ENCODE measurements at regions of chr5 and their contacts with region 1.

Region 1: DNA sequence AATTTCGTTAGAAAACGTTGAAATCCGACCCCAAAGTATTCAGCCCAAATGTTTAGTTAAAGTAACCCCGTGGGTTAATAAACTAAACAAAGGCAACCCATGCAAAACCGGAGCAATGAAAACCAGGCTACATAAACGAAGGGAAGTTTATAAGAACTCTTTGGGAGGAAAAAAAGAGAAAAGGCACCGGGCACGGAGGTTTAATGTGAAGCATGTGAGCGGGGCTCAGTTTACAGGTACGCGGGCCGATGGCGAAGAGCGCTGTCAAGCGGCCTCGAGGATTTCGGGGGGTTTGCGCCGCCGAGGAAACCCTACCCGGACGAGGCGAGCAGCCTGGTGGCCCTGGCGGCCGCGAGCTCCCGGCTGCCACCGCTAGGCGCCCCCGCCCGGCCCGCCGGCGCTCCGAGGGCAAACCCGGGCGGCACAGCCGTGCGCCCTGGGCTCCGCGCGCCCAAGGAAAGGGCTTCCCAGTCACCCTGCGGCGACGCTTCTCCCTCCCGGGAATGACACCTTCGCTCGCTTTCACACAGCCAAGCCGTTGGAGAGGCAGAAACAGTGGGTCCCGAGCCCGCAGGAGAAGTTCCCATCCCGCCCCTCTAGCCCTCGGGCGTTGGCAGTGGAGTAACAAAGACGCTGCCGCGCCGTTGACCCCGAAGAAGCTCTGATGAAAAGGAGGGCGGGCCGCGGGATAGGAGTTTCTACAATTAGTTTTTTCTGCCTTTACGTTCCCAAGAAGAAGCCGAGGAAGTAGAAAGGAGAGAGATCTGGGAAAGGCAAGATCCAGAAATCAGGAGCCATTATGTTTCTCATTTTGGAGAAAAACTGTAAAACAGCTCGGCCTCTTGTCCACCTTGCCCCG is 126.0 kb downstream of the TMEM174 start:
- DNase-seq: peak in 1 of 6 donors; percentile 70
- ATAC-seq: peak; percentile 47 to 81 (median 68)
- H3K4me3 ChIP-seq: peak overlapping the region in 1 of 4 donors; percentile 12
- H3K27ac ChIP-seq: no peak overlapping the region
- H3K4me1 ChIP-seq: peaks cover 0 to 4% (median 0%) of the 10 kb centered on the region in 3 donors
- H3K27me3 ChIP-seq: peaks cover 3 to 49% (median 27%) of the 10 kb centered on the region in 4 donors
- CTCF ChIP-seq: peak in 1 of 4 donors; percentile 14

Region 2: GRCh38 chr5:73229209-73229661 is 69.8 kb before region 1 on chr5:
- intact Hi-C with region 1: loop called in 1 of 3 experiments (anchors 10 kb)
- DNase-seq: no peak
- ATAC-seq: no peak
- H3K4me3 ChIP-seq: no peak overlapping the region
- H3K27ac ChIP-seq: no peak overlapping the region
- H3K4me1 ChIP-seq: peaks cover 0 to 7% (median 6%) of the 10 kb centered on the region in 3 donors
- H3K27me3 ChIP-seq: peaks cover 0 to 36% (median 4%) of the 10 kb centered on the region in 4 donors
- CTCF ChIP-seq: no peak

Region 3: DNA sequence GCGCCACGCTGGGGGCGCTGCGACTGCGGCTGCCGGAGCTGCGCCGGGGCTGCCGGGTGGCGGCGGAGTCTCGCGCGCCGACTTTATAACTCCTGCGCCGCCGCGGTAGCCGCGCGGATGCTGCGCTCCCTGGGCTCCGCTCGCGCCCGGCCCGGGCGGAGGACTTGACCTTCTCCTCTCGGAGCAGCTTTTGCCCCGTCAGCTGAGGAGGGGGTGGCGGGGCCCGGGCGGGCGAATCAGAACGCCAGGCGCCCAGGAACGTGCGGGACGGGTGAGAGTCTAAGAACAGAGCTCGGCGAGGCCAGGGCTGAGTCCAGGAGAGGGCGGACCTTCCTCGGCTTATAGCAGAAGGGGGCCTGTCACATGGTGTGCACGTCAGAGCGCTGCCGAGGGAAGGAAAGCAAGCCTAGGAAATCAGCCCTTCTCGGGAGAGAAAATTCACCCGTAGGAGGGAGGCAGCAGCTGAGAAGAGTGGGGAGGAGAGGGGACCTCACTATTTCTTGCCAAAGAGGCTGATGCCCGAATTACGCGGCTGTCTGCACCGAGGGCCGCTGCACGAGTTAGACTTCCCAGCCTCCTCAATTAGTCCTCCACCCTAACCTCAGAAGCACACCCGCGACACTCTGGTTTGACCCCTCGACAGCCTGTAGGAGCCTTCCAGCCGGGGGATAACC is 149.6 kb after region 1 on chr5 and contains the start of gene FOXD1:
- intact Hi-C with region 1: loop called in 1 of 3 experiments (anchors 10 kb)
- DNase-seq: peak in 5 of 6 donors; percentile 26 to 81 (median 55)
- ATAC-seq: peak; percentile 62 to 82 (median 69)
- H3K4me3 ChIP-seq: peak within 1 kb of the TSS in 2 of 4 donors; percentile 29 to 43
- H3K27ac ChIP-seq: no peak within 1 kb of the TSS
- H3K4me1 ChIP-seq: peaks cover 0 to 6% (median 4%) of the 10 kb centered on the region in 3 donors
- H3K27me3 ChIP-seq: peaks cover 23 to 67% (median 51%) of the 10 kb centered on the region in 4 donors
- CTCF ChIP-seq: no peak
- total RNA-seq, gene FOXD1: 0.06 to 0.12 TPM in 2 of 6 donors, not detected in the others

Region 4: DNA sequence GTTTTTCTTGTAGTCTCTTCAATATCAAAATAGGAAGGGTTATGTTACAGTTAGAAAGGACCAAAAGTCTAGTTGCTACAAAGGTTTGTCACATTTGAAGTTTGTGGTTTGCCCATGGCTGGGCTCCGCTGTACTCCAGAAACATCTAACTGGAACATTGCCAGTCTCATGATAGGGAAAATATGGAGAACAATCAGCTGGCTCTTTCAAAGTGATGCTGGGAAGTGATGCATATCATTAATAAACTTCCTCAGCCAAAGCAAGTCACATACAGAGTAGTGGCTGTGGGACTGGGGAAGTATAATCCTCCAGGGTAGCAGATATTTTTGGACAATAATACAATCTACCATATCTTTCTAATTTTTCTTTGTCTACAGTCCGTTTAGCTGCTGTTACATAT is 208.1 kb after region 1 on chr5:
- intact Hi-C with region 1: no loop called
- DNase-seq: no peak
- ATAC-seq: peak in 2 of 4 donors; percentile 14 to 34
- H3K4me3 ChIP-seq: no peak overlapping the region
- H3K27ac ChIP-seq: peak overlapping the region in 1 of 4 donors; percentile 17
- H3K4me1 ChIP-seq: peaks cover 0 to 6% (median 4%) of the 10 kb centered on the region in 3 donors
- H3K27me3 ChIP-seq: no peaks in the 10 kb centered on the region
- CTCF ChIP-seq: no peak

Measured in pancreas (tissue), 10 donors.